CD4-positive, alpha-beta memory T cell (primary cell): ENCODE measurements at regions of chr2 and their contacts with region 1.

Region 1: DNA sequence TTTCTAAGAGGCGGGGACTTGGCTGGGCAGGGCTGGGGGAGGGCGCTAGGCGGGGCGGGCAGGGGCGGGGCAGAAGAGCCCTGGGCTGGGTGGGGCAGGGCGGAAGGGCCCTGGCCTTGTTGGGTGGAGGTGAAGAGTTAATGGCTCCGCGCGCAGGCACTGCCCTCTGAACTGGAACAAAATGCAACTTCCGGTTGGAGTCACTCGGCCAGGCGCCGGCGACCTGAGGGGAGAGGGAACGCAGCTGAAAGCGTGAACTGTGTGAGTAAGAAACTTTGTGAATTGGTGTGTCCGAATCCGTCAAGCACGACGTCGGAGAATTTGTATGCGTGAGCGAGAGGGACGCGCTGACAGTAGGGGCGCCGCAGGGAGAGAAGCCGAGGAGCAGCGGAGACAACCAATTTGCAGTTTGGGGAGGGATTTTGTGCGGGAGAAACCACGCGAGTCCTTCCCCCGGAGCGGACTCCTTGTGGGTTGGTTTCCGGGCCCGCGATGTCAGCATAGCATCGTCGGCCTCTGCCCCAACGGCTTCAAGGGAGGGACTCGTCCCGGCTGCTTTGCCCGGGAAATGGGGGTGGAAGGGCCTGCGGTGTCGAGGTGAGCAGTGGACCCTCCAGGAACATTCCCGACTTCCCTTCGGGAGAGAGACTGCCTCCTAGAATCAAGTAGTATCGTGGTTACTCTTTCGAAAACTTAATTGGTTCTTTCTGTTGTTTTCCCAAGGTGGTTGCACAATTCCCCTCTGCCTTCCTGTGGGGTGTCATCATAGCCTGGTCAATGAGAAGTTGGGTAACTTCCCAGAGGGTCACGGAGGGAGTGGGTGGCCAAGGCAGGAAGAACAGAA is at the start of gene TANK:
- DNase-seq: peak; percentile 89 to 94 (median 91)
- H3K4me3 ChIP-seq: peak within 1 kb of the TSS; percentile 86 to 90
- H3K4me3 Mint-ChIP-seq: peak within 1 kb of the TSS; percentile 96 to 100 (median 98)
- H3K27ac ChIP-seq: peak within 1 kb of the TSS; percentile 95
- H3K27ac Mint-ChIP-seq: peak within 1 kb of the TSS; percentile 94 to 99 (median 98)
- H3K4me1 ChIP-seq: peaks cover 54% of the 10 kb centered on the region
- H3K4me1 Mint-ChIP-seq: peaks cover 37 to 84% (median 61%) of the 10 kb centered on the region in 4 donors
- H3K27me3 ChIP-seq: no peaks in the 10 kb centered on the region
- H3K27me3 Mint-ChIP-seq: no peaks in the 10 kb centered on the region
- total RNA-seq, gene TANK: 90.2 to 91.2 TPM

Region 2: DNA sequence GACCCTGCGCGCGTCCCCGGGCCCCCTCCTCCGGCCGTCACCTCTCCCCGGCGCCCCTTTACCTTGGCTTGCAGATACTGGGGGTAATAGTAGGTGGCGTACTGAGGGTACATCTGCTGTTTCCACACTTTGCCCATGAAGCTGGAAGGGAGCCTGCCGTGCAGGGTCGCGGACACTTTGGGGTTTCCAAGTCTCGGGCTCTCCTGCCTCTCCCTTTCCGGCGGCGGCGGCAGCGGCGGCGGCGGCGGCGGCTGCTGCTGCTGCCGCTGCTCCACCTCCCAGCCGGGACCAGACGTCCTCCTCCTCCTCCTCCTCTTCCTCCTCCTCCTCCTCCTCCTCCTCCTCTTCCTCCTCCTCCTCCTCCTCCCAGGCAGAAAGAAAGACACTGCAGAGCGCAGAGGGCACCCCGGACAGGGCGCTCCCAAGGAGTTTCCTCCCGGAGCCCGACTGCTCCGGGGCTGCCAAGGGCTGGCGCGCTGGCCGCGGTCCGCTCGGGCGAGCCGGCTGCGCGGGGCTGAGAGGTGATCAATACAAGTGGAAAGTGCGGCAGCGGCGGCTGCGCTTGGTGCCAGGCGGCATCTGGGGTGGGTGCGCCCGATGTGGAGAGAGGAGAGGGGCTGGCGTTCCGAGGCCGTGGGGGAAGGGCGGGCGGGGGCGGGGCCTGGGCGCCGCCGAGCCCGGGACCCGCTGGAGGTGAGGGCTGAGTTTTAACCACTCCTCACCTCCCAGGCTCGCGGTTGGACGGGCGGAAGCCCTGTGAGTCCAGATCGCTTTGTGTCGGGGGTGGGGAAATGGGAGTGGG is 667.0 kb before region 1 on chr2 and contains the start of gene RBMS1:
- CTCF ChIA-PET with region 1: no interaction called
- POLR2A ChIA-PET with region 1: no interaction called
- intact Hi-C with region 1: loop called (anchors 10 kb)
- DNase-seq: peak; percentile 47 to 69 (median 51)
- H3K4me3 ChIP-seq: peak within 1 kb of the TSS; percentile 49 to 64
- H3K4me3 Mint-ChIP-seq: peak within 1 kb of the TSS; percentile 91 to 98 (median 95)
- H3K27ac ChIP-seq: peak within 1 kb of the TSS; percentile 81
- H3K27ac Mint-ChIP-seq: peak within 1 kb of the TSS; percentile 85 to 97 (median 90)
- H3K4me1 ChIP-seq: peaks cover 43% of the 10 kb centered on the region
- H3K4me1 Mint-ChIP-seq: peaks cover 21 to 46% (median 32%) of the 10 kb centered on the region in 4 donors
- H3K27me3 ChIP-seq: no peaks in the 10 kb centered on the region
- H3K27me3 Mint-ChIP-seq: no peaks in the 10 kb centered on the region
- total RNA-seq, gene RBMS1: 101 to 103 TPM

Region 3: GRCh38 chr2:161090411-161090810 is 70.0 kb before region 1 on chr2:
- CTCF ChIA-PET with region 1: no interaction called
- POLR2A ChIA-PET with region 1: no interaction called
- intact Hi-C with region 1: loop called (anchors 2 kb)
- DNase-seq: peak in 4 of 5 donors; percentile 21 to 44 (median 34)
- H3K4me3 ChIP-seq: peak overlapping the region in 1 of 2 donors; percentile 14
- H3K4me3 Mint-ChIP-seq: peak overlapping the region; percentile 58 to 85 (median 78)
- H3K27ac ChIP-seq: no peak overlapping the region
- H3K27ac Mint-ChIP-seq: peak overlapping the region in 6 of 7 donors; percentile 27 to 89 (median 68)
- H3K4me1 ChIP-seq: peaks cover 11% of the 10 kb centered on the region
- H3K4me1 Mint-ChIP-seq: peaks cover 12 to 26% (median 20%) of the 10 kb centered on the region in 4 donors
- H3K27me3 ChIP-seq: no peaks in the 10 kb centered on the region
- H3K27me3 Mint-ChIP-seq: no peaks in the 10 kb centered on the region

Region 4: GRCh38 chr2:161199912-161200701 is 39.7 kb after region 1 on chr2:
- CTCF ChIA-PET with region 1: no interaction called
- POLR2A ChIA-PET with region 1: interaction called, 3 read pairs
- intact Hi-C with region 1: loop called (anchors 5 kb)
- DNase-seq: peak in 1 of 5 donors; percentile 4
- H3K4me3 ChIP-seq: no peak overlapping the region
- H3K4me3 Mint-ChIP-seq: peak overlapping the region; percentile 7 to 86 (median 64)
- H3K27ac ChIP-seq: no peak overlapping the region
- H3K27ac Mint-ChIP-seq: peak overlapping the region; percentile 67 to 92 (median 80)
- H3K4me1 ChIP-seq: peaks cover 45% of the 10 kb centered on the region
- H3K4me1 Mint-ChIP-seq: peaks cover 32 to 58% (median 42%) of the 10 kb centered on the region in 4 donors
- H3K27me3 ChIP-seq: no peaks in the 10 kb centered on the region
- H3K27me3 Mint-ChIP-seq: no peaks in the 10 kb centered on the region

Region 5: DNA sequence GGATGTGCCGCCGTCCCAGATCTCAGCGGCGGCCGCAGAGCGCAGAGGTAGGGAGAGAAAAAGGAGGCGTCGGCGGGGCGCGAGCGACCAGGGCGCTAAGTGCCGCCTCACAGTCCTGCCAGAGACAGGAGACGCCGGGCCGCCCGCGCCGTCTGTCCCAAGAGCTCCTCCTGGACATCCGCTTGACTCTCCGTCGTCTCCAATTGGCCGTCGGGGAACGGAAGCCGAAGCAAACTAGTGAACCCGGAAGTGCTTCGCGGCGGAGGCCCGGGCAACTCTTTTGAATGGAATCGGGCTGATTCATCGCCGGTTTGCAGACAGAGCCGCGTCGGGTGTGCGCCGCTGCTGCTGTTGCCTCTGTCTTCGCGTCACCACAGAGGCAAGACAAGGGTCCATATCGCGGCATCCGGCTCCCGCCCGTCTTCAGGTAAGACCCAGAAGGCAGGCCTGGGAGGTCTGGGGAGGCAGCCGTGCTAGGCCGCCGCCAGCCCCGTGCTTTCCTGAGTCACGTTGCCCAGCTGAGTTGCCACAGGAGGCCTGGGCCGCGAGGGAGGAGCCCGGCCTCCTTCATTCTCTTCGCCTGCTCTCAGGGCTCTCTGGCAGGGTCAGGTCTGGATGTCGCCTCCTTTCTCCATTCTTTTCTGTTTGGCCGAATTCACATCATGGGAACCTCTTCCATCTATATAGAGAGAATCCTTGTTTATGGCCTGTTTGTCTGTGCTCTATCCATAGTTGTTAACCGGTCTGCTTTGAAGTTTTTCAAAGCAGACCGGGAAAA is 147.9 kb after region 1 on chr2 and contains the start of gene PSMD14:
- CTCF ChIA-PET with region 1: no interaction called
- POLR2A ChIA-PET with region 1: no interaction called
- intact Hi-C with region 1: loop called (anchors 1 kb)
- DNase-seq: peak; percentile 86 to 94 (median 87)
- H3K4me3 ChIP-seq: peak within 1 kb of the TSS; percentile 87
- H3K4me3 Mint-ChIP-seq: peak within 1 kb of the TSS; percentile 86 to 98 (median 96)
- H3K27ac ChIP-seq: peak within 1 kb of the TSS; percentile 90
- H3K27ac Mint-ChIP-seq: peak within 1 kb of the TSS; percentile 91 to 98 (median 97)
- H3K4me1 ChIP-seq: peaks cover 25% of the 10 kb centered on the region
- H3K4me1 Mint-ChIP-seq: peaks cover 28 to 49% (median 37%) of the 10 kb centered on the region in 4 donors
- H3K27me3 ChIP-seq: no peaks in the 10 kb centered on the region
- H3K27me3 Mint-ChIP-seq: no peaks in the 10 kb centered on the region
- total RNA-seq, gene PSMD14: 14.1 to 20.0 TPM

Region 6: DNA sequence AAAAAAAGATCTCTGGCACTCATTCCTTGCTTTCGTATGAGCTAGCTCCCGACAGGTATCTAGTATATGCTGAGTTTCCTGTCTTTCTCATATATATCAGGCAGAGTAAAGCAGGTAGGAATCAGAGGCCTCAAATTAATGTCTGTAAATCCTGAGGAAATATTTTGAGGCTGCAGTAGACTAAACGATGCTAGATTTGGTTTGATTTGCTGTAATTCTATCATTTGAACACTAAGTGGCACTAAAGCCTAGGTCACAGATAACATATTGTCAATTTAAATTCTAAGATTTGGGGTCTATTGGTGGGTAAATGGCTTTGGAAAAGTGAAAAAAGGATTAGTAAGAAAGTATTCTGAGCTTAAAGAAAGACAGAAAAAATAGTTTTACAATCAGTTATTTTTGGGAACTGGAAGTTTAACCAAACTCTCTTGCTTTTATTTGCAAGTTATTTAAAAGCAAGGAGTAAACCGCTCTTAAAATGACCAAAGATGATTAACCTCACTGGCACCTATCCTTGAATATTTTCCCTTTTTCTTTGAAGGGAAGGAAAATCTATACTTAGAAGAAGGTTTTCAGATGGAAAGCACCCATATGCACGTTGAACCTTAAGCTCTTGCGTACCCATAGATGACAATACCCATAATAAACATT is 426.2 kb after region 1 on chr2:
- CTCF ChIA-PET with region 1: no interaction called
- POLR2A ChIA-PET with region 1: no interaction called
- intact Hi-C with region 1: no loop called
- DNase-seq: peak in 4 of 5 donors; percentile 23 to 33 (median 28)
- H3K4me3 ChIP-seq: no peak overlapping the region
- H3K4me3 Mint-ChIP-seq: no peak overlapping the region
- H3K27ac ChIP-seq: no peak overlapping the region
- H3K27ac Mint-ChIP-seq: no peak overlapping the region
- H3K4me1 ChIP-seq: no peaks in the 10 kb centered on the region
- H3K4me1 Mint-ChIP-seq: no peaks in the 10 kb centered on the region
- H3K27me3 ChIP-seq: no peaks in the 10 kb centered on the region
- H3K27me3 Mint-ChIP-seq: peaks cover 0 to 4% of the 10 kb centered on the region in 2 donors